MCF 10A (cell line): ENCODE measurements at regions of chr2 and their contacts with region 1.

Region 1: GRCh38 chr2:224650815-224651439 is 65.2 kb downstream of the CCDC195 start:
- DNase-seq: peak; percentile 70
- H3K4me3 Mint-ChIP-seq: no peak overlapping the region
- H3K27ac Mint-ChIP-seq: no peak overlapping the region
- H3K4me1 Mint-ChIP-seq: peaks cover 8% of the 10 kb centered on the region
- H3K27me3 Mint-ChIP-seq: peaks cover 9% of the 10 kb centered on the region
- CTCF ChIP-seq: peak; percentile 64

Region 2: DNA sequence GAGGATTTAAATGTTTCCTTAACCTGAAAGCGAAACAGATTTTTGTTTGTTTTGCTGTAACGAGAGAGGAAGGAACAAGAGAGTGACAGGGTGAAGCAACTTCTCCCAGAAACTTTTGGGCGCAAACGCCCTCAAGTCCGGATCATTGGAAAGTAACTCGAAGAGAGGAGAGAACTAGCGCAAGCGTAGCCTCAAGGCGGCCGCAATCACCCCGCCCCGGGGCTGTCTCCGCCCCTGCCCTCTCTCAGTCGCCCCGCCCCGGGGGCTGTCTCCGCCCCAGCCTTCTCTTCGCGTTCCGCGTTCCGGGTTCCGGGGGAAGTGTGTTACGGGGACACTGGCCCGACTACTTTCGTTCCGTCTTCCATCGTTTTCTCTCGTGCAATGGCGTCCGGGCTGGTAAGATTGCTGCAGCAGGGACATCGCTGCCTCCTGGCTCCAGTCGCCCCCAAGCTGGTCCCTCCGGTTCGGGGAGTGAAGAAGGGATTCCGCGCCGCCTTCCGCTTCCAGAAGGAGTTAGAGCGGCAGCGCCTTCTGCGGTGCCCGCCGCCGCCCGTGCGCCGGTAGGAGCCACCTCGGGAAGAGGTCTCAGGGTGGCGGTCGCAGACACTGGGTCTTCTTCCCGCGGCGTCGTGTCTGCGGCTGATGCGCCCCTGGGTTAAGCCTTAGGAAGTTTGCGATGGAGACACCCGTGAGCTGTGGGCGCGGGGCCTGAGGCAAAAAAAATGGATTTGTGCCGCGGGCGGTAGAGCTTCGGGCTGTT is 693.7 kb before region 1 on chr2 and contains the start of gene MRPL44:
- CTCF ChIA-PET with region 1: interaction called, 4 read pairs
- POLR2A ChIA-PET with region 1: no interaction called
- intact Hi-C with region 1: loop called (anchors 10 kb)
- DNase-seq: peak; percentile 95
- H3K4me3 Mint-ChIP-seq: peak within 1 kb of the TSS; percentile 92
- H3K27ac Mint-ChIP-seq: peak within 1 kb of the TSS; percentile 95
- H3K4me1 Mint-ChIP-seq: peaks cover 15% of the 10 kb centered on the region
- H3K27me3 Mint-ChIP-seq: no peaks in the 10 kb centered on the region
- CTCF ChIP-seq: no peak
- total RNA-seq, gene MRPL44: 27.4 and 31.2 TPM in 2 replicates

Region 3: GRCh38 chr2:224369028-224369632 is 281.8 kb before region 1 on chr2:
- CTCF ChIA-PET with region 1: interaction called, 11 read pairs
- POLR2A ChIA-PET with region 1: no interaction called
- intact Hi-C with region 1: no loop called
- DNase-seq: peak; percentile 66
- H3K4me3 Mint-ChIP-seq: no peak overlapping the region
- H3K27ac Mint-ChIP-seq: no peak overlapping the region
- H3K4me1 Mint-ChIP-seq: peaks cover 6% of the 10 kb centered on the region
- H3K27me3 Mint-ChIP-seq: no peaks in the 10 kb centered on the region
- CTCF ChIP-seq: peak; percentile 61

Region 4: DNA sequence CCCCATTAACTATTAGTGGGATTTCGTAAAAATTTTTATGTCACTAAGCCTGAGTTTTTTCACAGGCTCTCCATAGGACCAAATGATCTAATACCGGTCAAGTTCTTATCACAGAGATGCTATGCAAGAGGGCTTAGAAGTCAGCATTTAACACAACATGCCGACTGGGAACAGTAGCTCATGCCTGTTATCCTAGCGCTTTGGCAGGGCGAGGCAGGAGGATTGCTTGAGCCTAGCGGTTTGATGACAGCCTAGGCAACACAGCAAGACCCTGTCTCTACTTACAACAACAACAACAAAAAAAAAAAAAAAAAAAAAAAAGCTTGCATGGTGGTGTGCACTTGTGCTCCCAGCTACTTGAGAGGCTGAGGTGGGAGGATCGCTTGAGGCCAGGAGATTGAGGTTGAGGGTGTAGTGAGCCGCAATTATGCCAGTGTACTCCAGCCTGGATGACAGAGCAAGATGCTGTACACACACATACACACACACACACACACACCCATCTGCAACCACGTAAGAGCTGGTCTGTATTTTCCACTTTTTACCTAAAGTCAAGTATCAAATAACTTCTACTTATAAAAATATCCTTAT is 181.5 kb before region 1 on chr2:
- CTCF ChIA-PET with region 1: interaction called, 4 read pairs
- POLR2A ChIA-PET with region 1: no interaction called
- intact Hi-C with region 1: loop called (anchors 10 kb)
- DNase-seq: no peak
- H3K4me3 Mint-ChIP-seq: no peak overlapping the region
- H3K27ac Mint-ChIP-seq: no peak overlapping the region
- H3K4me1 Mint-ChIP-seq: no peaks in the 10 kb centered on the region
- H3K27me3 Mint-ChIP-seq: no peaks in the 10 kb centered on the region
- CTCF ChIP-seq: no peak

Region 5: GRCh38 chr2:224778474-224778877 is 127.5 kb after region 1 on chr2:
- CTCF ChIA-PET with region 1: interaction called, 32 read pairs
- POLR2A ChIA-PET with region 1: no interaction called
- intact Hi-C with region 1: loop called (anchors 1 kb)
- DNase-seq: peak; percentile 75
- H3K4me3 Mint-ChIP-seq: no peak overlapping the region
- H3K27ac Mint-ChIP-seq: no peak overlapping the region
- H3K4me1 Mint-ChIP-seq: peaks cover 4% of the 10 kb centered on the region
- H3K27me3 Mint-ChIP-seq: no peaks in the 10 kb centered on the region
- CTCF ChIP-seq: peak; percentile 50

Region 6: GRCh38 chr2:225458431-225459117 is 807.6 kb after region 1 on chr2:
- CTCF ChIA-PET with region 1: no interaction called
- POLR2A ChIA-PET with region 1: no interaction called
- intact Hi-C with region 1: no loop called
- DNase-seq: no peak
- H3K4me3 Mint-ChIP-seq: no peak overlapping the region
- H3K27ac Mint-ChIP-seq: no peak overlapping the region
- H3K4me1 Mint-ChIP-seq: peaks cover 12% of the 10 kb centered on the region
- H3K27me3 Mint-ChIP-seq: no peaks in the 10 kb centered on the region
- CTCF ChIP-seq: no peak